ENCODE measurements at regions of chr17 and their contacts with region 1.

Region 1: GRCh38 chr17:32486111-32486700 is 587 bp upstream of the CDK5R1 start:
- DNase-seq: peak; percentile 88 to 94 (median 92)
- ATAC-seq: peak; percentile 90
- H3K4me3 ChIP-seq: peak overlapping the region; percentile 56
- H3K27ac ChIP-seq: peak overlapping the region; percentile 78
- H3K4me1 ChIP-seq: peaks cover 11 to 46% of the 10 kb centered on the region in 2 experiments; a peak in 4 of 5 replicates
- H3K27me3 ChIP-seq: no peaks in the 10 kb centered on the region
- CTCF ChIP-seq: peak in 1 of 3 experiments; percentile 0; a peak in 1 of 6 replicates
- EP300 ChIP-seq: no peak
- POLR2A ChIP-seq: peak; percentile 62
- RAD21 ChIP-seq: no peak

Region 2: DNA sequence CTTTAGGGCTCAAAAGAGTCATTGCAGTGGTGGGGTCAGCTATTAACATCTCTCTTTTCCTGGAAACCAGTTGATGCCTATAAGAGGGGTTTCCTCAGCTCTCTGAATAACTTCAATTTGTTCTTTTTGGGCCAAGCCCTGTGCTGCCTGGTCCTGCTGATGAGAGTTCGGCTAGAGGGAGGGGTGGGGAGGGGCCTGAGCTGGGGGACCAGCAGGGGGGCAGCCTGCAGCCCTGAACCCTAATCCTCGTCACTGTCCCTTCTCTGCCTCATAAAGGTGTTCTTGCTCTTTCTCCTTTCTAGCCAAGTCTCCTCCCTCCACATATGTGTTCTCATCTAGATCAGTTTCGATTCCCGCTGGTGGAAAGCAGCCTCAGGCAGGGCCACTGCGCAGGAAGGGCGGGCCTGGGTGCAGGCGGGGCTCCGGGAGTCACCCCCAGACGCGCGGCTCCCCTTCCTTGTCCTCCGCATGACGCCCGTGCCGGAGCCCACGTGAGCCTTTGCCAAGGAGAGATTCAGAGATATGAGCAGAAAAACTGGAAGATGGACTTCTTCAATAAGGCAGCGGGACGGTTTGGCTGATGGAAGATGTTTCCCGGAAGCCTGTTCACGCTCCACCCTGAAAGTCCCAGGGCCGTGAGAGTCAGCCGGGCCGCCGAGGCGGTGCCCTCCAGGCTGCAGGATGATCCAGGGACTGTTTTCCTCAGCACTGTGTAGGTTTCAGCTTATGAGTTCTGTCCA is 358.9 kb before region 1 on chr17:
- CTCF ChIA-PET with region 1: no interaction called
- POLR2A ChIA-PET with region 1: no interaction called
- in situ Hi-C with region 1: no loop called
- intact Hi-C with region 1: no loop called
- DNase-seq: peak; percentile 73 to 80 (median 74)
- ATAC-seq: peak; percentile 95
- H3K4me3 ChIP-seq: peak overlapping the region; percentile 57
- H3K27ac ChIP-seq: peak overlapping the region; percentile 57
- H3K4me1 ChIP-seq: peaks cover 14 to 15% of the 10 kb centered on the region in 2 experiments; a peak in 4 of 5 replicates
- H3K27me3 ChIP-seq: no peaks in the 10 kb centered on the region
- CTCF ChIP-seq: no peak
- EP300 ChIP-seq: no peak
- POLR2A ChIP-seq: peak; percentile 70
- RAD21 ChIP-seq: no peak

Region 3: GRCh38 chr17:32470405-32471167 is 15.6 kb before region 1 on chr17:
- CTCF ChIA-PET with region 1: no interaction called
- POLR2A ChIA-PET with region 1: interaction called, 15 read pairs
- in situ Hi-C with region 1: no loop called
- intact Hi-C with region 1: no loop called
- DNase-seq: no peak
- ATAC-seq: no peak
- H3K4me3 ChIP-seq: no peak overlapping the region
- H3K27ac ChIP-seq: no peak overlapping the region
- H3K4me1 ChIP-seq: no peaks in the 10 kb centered on the region
- H3K27me3 ChIP-seq: no peaks in the 10 kb centered on the region
- CTCF ChIP-seq: no peak
- EP300 ChIP-seq: no peak
- POLR2A ChIP-seq: no peak
- RAD21 ChIP-seq: no peak

Region 4: GRCh38 chr17:32523017-32523680 is 36.9 kb after region 1 on chr17:
- CTCF ChIA-PET with region 1: no interaction called
- POLR2A ChIA-PET with region 1: no interaction called
- in situ Hi-C with region 1: no loop called
- intact Hi-C with region 1: no loop called
- DNase-seq: no peak
- ATAC-seq: no peak
- H3K4me3 ChIP-seq: no peak overlapping the region
- H3K27ac ChIP-seq: no peak overlapping the region
- H3K4me1 ChIP-seq: peaks cover 2 to 8% of the 10 kb centered on the region in 2 experiments; a peak in 2 of 5 replicates
- H3K27me3 ChIP-seq: no peaks in the 10 kb centered on the region
- CTCF ChIP-seq: no peak
- EP300 ChIP-seq: no peak
- POLR2A ChIP-seq: no peak
- RAD21 ChIP-seq: no peak

Region 5: GRCh38 chr17:32659419-32659842 is 173.2 kb after region 1 on chr17:
- CTCF ChIA-PET with region 1: no interaction called
- POLR2A ChIA-PET with region 1: no interaction called
- in situ Hi-C with region 1: no loop called
- intact Hi-C with region 1: loop called (anchors 10 kb)
- DNase-seq: peak; percentile 65 to 72 (median 70)
- ATAC-seq: peak; percentile 88
- H3K4me3 ChIP-seq: no peak overlapping the region
- H3K27ac ChIP-seq: no peak overlapping the region
- H3K4me1 ChIP-seq: no peaks in the 10 kb centered on the region
- H3K27me3 ChIP-seq: no peaks in the 10 kb centered on the region
- CTCF ChIP-seq: peak; percentile 83 to 87 (median 83)
- EP300 ChIP-seq: no peak
- POLR2A ChIP-seq: no peak
- RAD21 ChIP-seq: peak in 1 of 2 experiments; percentile 67; a peak in 3 of 4 replicates